ENCODE measurements at regions of chr14 and their contacts with region 1.

Region 1: GRCh38 chr14:67285876-67286452 is 44.7 kb downstream of the PALS1 start:
- DNase-seq: no peak
- H3K4me3 Mint-ChIP-seq: no peak overlapping the region
- H3K27ac Mint-ChIP-seq: no peak overlapping the region
- H3K4me1 Mint-ChIP-seq: no peaks in the 10 kb centered on the region
- H3K27me3 Mint-ChIP-seq: no peaks in the 10 kb centered on the region

Region 2: GRCh38 chr14:67166450-67166853 is 119.5 kb before region 1 on chr14:
- CTCF ChIA-PET with region 1: interaction called, 41 read pairs
- POLR2A ChIA-PET with region 1: no interaction called
- DNase-seq: peak; percentile 28
- H3K4me3 Mint-ChIP-seq: no peak overlapping the region
- H3K27ac Mint-ChIP-seq: no peak overlapping the region
- H3K4me1 Mint-ChIP-seq: peaks cover 9% of the 10 kb centered on the region
- H3K27me3 Mint-ChIP-seq: no peaks in the 10 kb centered on the region

Region 3: DNA sequence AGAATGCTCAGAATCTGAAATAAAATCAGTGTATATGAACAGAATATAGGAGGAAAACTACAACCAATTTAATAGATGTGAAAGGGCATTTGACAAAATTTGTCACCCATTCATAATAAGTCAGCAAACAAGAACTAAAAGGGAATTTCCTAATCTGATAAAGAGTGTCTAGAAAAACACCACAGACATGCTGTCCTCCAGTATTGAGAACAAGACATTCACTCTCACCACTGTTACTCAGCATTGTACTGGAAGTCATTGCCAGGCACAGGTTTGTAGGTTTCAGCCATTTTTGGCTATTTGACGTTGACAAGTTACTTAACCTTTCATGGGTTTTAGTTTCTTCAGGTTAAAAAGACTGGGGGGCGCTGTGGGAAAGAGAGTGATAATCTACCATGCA is 87.4 kb after region 1 on chr14:
- CTCF ChIA-PET with region 1: no interaction called
- POLR2A ChIA-PET with region 1: no interaction called
- DNase-seq: no peak
- H3K4me3 Mint-ChIP-seq: no peak overlapping the region
- H3K27ac Mint-ChIP-seq: peak overlapping the region; percentile 21
- H3K4me1 Mint-ChIP-seq: peaks cover 27% of the 10 kb centered on the region
- H3K27me3 Mint-ChIP-seq: no peaks in the 10 kb centered on the region

Measured in activated CD4-positive, alpha-beta memory T cell treated with anti-CD3 and anti-CD28 coated beads, Interleukin-2, amount 10 ng/mL, durations not matched to agents 7 days and 5 days (primary cell).